ENCODE measurements at regions of chr11 and their contacts with region 1.

Region 1: GRCh38 chr11:64688534-64688982 is 34.4 kb downstream of the NRXN2 start:
- DNase-seq: peak; percentile 98
- ATAC-seq: peak; percentile 88
- H3K4me3 Mint-ChIP-seq: peak overlapping the region; percentile 87
- H3K27ac Mint-ChIP-seq: peak overlapping the region; percentile 39; the same call in 1 of the 2 replicates
- H3K4me1 Mint-ChIP-seq: peaks cover 27% of the 10 kb centered on the region
- H3K27me3 Mint-ChIP-seq: peaks cover 41% of the 10 kb centered on the region
- CTCF ChIP-seq: peak; percentile 93

Region 2: DNA sequence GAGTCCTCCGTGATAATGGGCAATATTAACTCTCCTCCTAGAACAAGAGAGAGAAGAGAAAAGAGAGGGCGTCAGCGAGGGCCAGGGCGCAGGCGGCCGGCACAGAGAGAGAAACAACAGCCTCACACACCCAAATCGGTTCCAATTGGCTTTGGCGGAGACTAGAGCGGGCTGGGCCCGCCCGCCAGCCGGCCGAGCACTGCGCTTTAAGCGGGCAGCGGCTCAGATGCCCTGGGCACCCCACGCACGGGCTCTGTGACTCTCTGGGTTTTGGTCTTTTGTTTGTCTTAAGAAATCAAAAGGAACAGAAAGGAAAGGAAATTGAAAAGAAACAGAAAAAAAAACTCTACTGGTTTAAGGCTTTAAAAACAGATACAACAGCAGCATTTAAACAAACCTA is 80.5 kb before region 1 on chr11:
- CTCF ChIA-PET with region 1: interaction called, 10 read pairs
- POLR2A ChIA-PET with region 1: interaction called, 5 read pairs
- DNase-seq: no peak
- ATAC-seq: peak; percentile 38
- H3K4me3 Mint-ChIP-seq: no peak overlapping the region
- H3K27ac Mint-ChIP-seq: no peak overlapping the region
- H3K4me1 Mint-ChIP-seq: peaks cover 7% of the 10 kb centered on the region; the same call in 1 of the 2 replicates
- H3K27me3 Mint-ChIP-seq: no peaks in the 10 kb centered on the region; the same call in none of the 2 replicates
- CTCF ChIP-seq: no peak

Region 3: DNA sequence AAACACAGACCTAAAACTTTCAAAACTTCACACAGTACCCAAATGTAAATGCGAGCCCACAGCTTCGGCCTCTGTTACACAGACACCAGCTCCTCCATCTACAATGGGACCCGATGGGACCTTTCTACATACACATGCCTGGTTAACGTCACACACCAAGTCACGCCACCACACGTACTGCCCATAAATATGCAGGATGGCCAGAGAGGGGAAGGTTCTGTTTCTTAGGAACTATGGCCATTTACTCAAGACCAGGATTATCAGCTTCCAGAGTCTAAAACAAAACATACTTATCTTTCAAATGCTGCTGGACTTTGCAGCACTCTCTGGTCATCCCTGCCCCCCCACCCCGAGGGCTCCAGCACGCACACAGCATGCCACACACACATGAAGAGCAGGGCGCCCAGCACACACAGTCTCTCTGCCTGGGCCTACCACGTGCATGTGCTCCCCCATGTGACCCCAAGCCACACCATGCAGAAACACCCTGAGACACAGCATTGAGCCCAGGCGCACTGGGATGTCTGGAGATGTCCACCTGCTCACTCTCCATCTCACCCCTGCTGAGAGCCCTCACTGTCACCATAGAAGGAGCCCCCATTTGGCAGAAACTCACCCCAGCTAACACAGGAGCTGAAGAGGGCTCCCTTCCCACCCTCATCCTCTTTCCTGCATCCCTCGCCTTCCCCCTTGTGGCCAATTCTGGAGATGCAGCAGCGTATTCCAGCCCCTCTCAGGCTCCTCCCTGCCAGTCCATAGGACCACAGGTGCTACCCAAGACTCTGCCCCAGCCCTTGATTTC is 35.8 kb before region 1 on chr11:
- CTCF ChIA-PET with region 1: interaction called, 40 read pairs
- POLR2A ChIA-PET with region 1: interaction called, 3 read pairs
- DNase-seq: peak; percentile 97
- ATAC-seq: peak; percentile 79
- H3K4me3 Mint-ChIP-seq: peak overlapping the region; percentile 20; the same call in 1 of the 2 replicates
- H3K27ac Mint-ChIP-seq: no peak overlapping the region
- H3K4me1 Mint-ChIP-seq: peaks cover 12% of the 10 kb centered on the region
- H3K27me3 Mint-ChIP-seq: peaks cover 14% of the 10 kb centered on the region
- CTCF ChIP-seq: peak; percentile 80

Region 4: DNA sequence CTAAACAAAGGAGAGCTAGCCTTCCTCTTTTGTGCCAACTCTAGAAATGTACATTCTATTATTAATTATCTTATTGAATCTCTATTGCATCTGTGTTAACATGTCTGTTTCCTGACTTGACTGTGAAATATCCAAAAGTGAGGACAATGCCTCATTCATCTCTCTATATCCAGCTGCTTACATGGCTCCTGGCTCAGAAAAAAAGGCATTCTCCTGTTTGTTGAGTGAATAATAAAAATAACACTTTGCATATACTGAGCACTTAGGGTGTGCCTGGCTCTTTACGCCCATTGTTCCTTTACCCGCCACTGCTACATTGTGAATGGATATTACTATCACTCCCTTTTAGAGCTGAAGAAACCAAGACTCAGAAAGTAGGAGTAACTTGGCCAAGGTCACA is 14.5 kb after region 1 on chr11:
- CTCF ChIA-PET with region 1: interaction called, 76 read pairs
- POLR2A ChIA-PET with region 1: no interaction called
- DNase-seq: no peak
- ATAC-seq: no peak
- H3K4me3 Mint-ChIP-seq: no peak overlapping the region
- H3K27ac Mint-ChIP-seq: no peak overlapping the region
- H3K4me1 Mint-ChIP-seq: no peaks in the 10 kb centered on the region; the same call in 1 of the 2 replicates
- H3K27me3 Mint-ChIP-seq: peaks cover 35% of the 10 kb centered on the region
- CTCF ChIP-seq: no peak

Region 5: DNA sequence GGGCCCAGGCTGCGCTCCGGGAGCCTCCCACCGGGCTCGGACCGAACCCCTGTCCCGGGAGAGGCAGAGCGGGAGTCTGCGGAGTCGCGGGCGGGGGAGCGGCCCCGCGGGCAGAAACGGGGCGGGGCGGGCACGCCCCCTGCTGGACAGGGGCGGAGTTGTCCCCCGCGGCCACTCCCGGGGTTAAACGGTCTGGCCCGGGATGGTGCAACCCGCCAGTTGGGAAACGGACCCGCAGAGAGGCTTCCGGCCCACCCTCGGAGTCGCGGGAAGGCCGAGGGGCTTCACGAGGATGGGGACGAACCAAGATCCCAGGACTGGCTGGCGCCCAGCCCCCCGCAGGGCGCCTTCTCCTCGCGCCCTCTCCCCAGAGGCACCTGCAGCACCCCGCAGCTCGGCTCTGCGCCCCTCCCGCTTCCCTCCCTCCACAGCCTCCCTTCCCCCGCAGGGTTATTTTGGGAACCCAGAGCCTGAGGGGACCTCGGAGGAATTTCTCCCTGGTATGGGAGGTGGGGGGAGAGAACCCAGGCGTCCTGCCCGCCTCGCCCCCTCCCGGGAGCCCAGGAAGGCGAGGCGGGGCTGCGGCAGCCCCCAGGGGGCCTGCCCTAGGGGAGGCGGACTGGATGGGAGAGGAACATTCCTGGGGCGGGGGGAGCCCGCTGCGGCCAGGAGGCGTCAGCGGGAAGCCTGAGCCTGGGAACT is 54.5 kb after region 1 on chr11:
- CTCF ChIA-PET with region 1: interaction called, 68 read pairs
- POLR2A ChIA-PET with region 1: no interaction called
- DNase-seq: peak; percentile 83
- ATAC-seq: peak; percentile 12
- H3K4me3 Mint-ChIP-seq: peak overlapping the region; percentile 69; the same call in 1 of the 2 replicates
- H3K27ac Mint-ChIP-seq: no peak overlapping the region
- H3K4me1 Mint-ChIP-seq: peaks cover 39% of the 10 kb centered on the region
- H3K27me3 Mint-ChIP-seq: peaks cover 37% of the 10 kb centered on the region
- CTCF ChIP-seq: peak; percentile 99

Region 6: DNA sequence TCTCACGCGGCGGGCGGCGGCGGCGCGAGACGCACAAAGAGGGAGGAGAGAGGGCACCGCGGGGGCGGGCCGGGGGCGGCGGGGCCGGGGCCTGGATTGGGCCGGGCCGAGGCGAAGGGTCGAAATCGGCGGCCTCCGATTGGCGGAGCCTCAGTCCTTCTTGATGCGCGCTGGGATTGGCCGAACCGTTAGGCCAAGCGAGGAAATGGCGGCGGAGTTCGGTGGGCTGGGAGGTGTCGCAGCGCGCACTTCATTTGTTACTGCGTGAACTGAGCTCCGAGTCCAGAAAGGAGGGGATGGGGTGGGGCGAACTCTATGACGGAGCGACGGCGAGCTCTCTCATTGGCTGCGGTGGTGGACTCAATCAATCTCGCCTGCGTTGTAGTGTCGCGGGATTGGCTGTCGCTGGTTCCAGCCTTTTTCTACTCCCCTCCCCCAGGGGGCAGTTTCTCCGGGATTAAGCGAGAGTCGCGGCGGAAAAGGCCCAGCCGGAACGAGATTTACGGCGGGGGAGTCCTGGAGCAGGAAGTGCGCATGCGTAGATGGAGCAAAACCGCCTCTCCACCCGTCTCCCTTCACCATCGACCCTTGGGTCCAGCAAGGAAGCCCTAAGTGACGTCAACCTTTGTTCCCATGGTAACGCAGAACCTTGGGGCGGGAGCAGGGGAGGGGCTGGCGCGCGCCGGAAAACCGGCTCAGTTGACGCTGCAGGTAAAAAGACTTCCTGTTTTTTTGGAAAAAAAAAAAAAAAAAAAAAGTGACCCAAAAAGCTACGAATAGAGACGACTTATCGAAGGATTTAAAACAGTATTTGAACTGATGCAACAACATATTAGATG is 90.2 kb after region 1 on chr11 and contains the start of gene SF1:
- CTCF ChIA-PET with region 1: interaction called, 11 read pairs
- POLR2A ChIA-PET with region 1: no interaction called
- DNase-seq: peak; percentile 98
- ATAC-seq: peak; percentile 95
- H3K4me3 Mint-ChIP-seq: peak within 1 kb of the TSS; percentile 79
- H3K27ac Mint-ChIP-seq: peak within 1 kb of the TSS; percentile 98
- H3K4me1 Mint-ChIP-seq: peaks cover 32% of the 10 kb centered on the region
- H3K27me3 Mint-ChIP-seq: no peaks in the 10 kb centered on the region
- CTCF ChIP-seq: no peak
- total RNA-seq, gene SF1: 285 to 314 TPM (median 300 TPM) in 3 replicates

Region 7: DNA sequence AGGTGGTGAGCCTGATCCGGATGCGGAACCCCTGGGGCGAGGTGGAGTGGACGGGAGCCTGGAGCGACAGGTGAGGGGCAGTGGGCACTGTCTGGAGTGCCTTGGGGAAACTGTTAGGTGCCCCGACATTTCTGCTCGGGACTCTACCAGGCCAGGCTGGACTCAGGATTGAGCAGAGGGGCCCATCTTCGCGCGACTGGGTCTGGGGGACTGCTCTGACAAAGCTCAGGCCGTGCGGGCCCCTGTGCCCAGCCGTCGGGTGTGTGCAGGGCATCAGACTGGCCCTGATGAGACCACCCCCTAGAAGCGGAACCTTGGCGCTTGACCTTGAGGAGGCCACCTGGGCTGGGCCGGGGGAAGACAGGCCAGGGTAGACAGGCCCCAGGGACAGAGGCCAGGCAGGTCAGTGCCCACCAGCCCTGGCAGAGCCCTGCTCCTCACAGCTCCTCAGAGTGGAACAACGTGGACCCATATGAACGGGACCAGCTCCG is 499.5 kb after region 1 on chr11:
- CTCF ChIA-PET with region 1: no interaction called
- POLR2A ChIA-PET with region 1: no interaction called
- DNase-seq: no peak
- ATAC-seq: no peak
- H3K4me3 Mint-ChIP-seq: no peak overlapping the region
- H3K27ac Mint-ChIP-seq: no peak overlapping the region
- H3K4me1 Mint-ChIP-seq: peaks cover 37% of the 10 kb centered on the region
- H3K27me3 Mint-ChIP-seq: no peaks in the 10 kb centered on the region
- CTCF ChIP-seq: no peak

Measured in WTC11 (cell line).